AG04450 (cell line): ENCODE measurements at regions of chr9 and their contacts with region 1.

Region 1: DNA sequence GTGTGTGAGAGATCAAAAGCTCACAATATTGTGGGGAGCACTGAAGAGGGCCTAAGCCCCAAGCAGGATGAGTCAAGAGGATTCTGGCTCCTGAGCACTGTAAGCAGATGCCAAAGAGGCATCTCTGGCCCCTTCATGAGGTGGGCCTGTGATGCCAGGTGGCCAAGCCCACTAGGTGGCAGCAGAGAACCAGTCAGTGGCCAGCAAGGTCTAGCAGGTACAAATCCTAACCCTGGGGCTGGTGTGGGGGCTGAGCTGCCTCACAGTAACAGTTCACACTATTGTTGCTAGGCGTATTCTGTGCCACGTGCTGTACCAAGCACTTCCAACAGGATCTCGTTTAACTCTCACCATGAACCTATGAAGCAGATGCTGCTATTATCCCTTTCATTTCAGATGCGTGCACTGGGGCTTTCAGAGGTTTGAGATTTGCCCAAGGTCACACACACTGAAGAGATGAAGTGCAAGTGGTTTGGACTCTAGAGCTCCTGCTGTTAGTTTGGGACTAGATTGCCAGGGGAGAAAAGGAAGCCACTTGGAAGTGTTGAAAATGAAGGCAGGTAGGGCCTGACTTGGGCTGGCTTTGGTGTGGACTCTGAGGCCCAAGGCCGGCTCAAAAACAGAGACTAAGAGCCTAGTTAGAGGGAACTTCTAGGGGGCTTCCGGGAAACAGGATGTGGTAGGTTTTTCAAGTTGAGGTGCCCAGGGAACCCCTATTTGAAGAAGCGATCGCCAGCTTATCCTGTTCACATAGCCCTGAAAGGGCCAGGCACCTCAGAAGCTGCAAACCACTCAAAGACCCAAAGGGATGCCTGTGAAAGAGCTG is 4.4 kb upstream of the MLANA start:
- DNase-seq: peak; percentile 23
- H3K4me3 ChIP-seq: no peak overlapping the region
- H3K27ac ChIP-seq: no peak overlapping the region
- H3K27me3 ChIP-seq: peaks cover 9% of the 10 kb centered on the region
- CTCF ChIP-seq: peak; percentile 97

Region 2: DNA sequence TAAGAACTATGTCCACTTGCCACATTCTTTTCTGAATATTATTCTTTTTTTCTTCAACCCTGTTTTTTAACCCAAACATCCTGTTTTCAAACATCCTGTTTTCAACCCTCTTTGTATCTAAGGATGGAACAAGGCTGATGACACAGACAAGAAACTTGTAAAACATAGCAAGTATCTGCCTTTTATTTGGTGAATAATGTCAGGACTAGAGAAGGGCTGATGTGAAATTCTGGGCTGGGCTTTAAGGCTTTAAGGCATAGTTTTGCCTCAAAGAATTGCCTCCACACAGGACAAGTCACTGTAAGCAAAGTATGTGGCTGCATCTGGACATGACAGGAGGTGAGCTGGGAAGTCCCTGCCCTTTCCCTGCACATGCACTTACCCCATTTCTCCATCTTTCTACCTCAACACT is 299.9 kb before region 1 on chr9:
- CTCF ChIA-PET with region 1: no interaction called
- POLR2A ChIA-PET with region 1: no interaction called
- DNase-seq: peak; percentile 37
- H3K4me3 ChIP-seq: no peak overlapping the region
- H3K27ac ChIP-seq: peak overlapping the region; percentile 93
- H3K27me3 ChIP-seq: no peaks in the 10 kb centered on the region
- CTCF ChIP-seq: no peak

Region 3: DNA sequence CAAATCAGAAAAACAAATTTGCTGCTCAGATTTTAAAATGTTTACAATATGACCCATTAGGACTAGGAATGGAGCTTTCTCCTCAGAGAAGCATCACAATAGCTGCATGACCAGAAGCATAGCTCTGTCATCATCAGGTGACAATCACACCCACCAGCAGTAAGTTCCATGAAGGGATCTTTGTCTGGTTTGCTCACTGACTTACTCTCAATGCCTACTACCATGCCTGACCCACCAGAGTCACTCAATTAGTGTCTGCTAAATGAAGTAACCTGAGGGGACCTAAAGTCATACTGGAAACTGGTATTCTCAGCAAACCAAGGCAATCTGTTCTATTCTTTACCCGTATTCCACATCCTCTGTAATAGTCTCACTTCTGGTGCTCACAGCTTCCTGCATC is 61.1 kb before region 1 on chr9:
- CTCF ChIA-PET with region 1: no interaction called
- POLR2A ChIA-PET with region 1: no interaction called
- DNase-seq: no peak
- H3K4me3 ChIP-seq: no peak overlapping the region
- H3K27ac ChIP-seq: no peak overlapping the region
- H3K27me3 ChIP-seq: no peaks in the 10 kb centered on the region
- CTCF ChIP-seq: no peak

Region 4: GRCh38 chr9:5851445-5851844 is 34.9 kb before region 1 on chr9:
- CTCF ChIA-PET with region 1: interaction called, 14 read pairs
- POLR2A ChIA-PET with region 1: no interaction called
- DNase-seq: no peak
- H3K4me3 ChIP-seq: no peak overlapping the region
- H3K27ac ChIP-seq: no peak overlapping the region
- H3K27me3 ChIP-seq: peaks cover 37% of the 10 kb centered on the region
- CTCF ChIP-seq: no peak

Region 5: GRCh38 chr9:5869315-5870019 is 16.9 kb before region 1 on chr9:
- CTCF ChIA-PET with region 1: interaction called, 19 read pairs
- POLR2A ChIA-PET with region 1: no interaction called
- DNase-seq: no peak
- H3K4me3 ChIP-seq: no peak overlapping the region
- H3K27ac ChIP-seq: no peak overlapping the region
- H3K27me3 ChIP-seq: peaks cover 3% of the 10 kb centered on the region
- CTCF ChIP-seq: peak; percentile 36

Region 6: DNA sequence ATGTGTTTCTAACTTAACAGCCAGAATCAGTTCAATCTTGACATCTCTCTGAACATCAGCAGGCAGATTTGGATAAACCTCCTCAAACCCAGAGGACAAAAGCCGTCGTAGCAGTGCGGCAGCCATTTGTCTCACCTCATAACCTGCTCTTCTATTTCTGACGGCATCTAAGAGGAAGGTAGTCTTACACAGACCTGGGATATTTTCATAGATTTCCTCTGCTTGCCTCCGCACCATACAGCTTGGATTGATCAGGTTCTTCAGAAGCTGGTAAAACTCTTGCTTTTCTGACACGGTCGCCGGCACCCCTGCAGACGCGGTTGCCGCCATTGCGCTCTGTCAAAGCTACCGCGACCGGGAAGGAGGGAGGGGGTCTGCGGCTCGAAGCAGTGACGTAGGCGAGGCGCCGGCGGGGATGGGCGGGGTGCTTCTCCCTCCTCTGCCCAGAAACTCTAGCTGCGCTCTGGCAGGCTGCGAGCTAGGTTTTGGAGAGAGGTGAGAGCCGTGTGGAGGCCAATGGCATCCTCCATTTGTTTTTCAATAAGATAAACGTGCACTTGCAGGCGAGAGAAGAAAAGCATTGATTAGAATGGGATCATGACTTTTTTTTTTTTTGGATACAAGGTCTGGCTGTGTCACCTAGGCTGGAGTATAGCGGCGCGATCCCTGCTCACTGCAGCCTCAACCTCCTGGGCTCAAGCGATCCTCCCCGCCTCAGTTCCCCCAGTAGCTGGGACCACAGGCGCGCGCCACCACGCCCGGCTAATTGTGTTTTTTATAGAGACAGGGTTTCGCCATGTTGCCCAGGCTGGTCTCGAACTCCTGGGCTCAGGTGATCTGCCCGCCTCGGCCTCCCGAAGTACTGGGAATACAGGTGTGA is 129.2 kb after region 1 on chr9 and contains the start of gene RANBP6:
- CTCF ChIA-PET with region 1: interaction called, 12 read pairs
- POLR2A ChIA-PET with region 1: no interaction called
- DNase-seq: peak; percentile 39
- H3K4me3 ChIP-seq: peak within 1 kb of the TSS; percentile 76
- H3K27ac ChIP-seq: peak within 1 kb of the TSS; percentile 80
- H3K27me3 ChIP-seq: no peaks in the 10 kb centered on the region
- CTCF ChIP-seq: no peak
- polyA plus RNA-seq, gene RANBP6: 13.3 and 18.9 TPM in 2 replicates

Region 7: GRCh38 chr9:6055213-6055612 is 168.9 kb after region 1 on chr9:
- CTCF ChIA-PET with region 1: interaction called, 108 read pairs
- POLR2A ChIA-PET with region 1: no interaction called
- DNase-seq: peak; percentile 79
- H3K4me3 ChIP-seq: no peak overlapping the region
- H3K27ac ChIP-seq: no peak overlapping the region
- H3K27me3 ChIP-seq: peaks cover 2% of the 10 kb centered on the region
- CTCF ChIP-seq: peak; percentile 71